Activated CD8-positive, alpha-beta T cell treated with anti-CD3 and anti-CD28 coated beads, Interleukin-2, amount 10 ng/mL, durations not matched to agents 7 days and 5 days (primary cell): ENCODE measurements at regions of chr7 and their contacts with region 1.

Region 1: DNA sequence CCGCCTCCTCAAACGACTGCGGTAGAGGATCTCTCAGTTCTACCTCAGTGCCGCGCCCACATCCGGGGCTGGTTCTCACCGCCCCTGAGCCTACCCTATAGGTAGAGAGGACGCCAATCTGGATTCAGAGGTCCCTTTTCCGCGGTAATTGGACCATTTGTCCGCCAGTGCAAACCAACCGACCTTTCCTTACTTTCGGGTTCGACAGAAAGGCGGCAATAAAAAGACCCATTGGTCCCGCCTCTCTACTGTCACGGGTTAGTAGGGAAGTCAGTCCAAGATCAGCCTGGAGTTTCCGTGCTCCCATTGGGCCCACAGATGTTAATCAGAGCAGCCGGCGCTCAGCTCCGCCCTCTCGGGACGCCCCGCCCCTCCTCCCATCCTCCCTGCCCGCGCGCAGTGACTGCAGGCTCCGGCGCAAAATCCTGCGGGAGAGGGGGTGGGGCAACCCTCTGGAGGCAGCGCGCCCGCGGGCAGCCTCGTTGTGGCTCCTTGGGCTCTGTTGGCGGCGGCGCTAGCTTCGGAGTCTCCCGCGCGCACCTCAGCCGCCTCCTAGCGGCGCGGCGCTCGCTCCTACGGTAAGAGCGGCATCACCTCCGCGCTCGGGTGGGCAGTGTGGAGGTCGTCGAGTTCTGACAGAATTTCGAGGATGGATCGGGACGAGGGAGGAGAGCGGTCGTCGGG is at the starts of genes PHTF2 and TMEM60:
- DNase-seq: peak; percentile 97
- ATAC-seq: peak; percentile 95
- H3K4me3 Mint-ChIP-seq: peak within 1 kb of the TSS; percentile 99
- H3K27ac Mint-ChIP-seq: peak within 1 kb of the TSS; percentile 92
- H3K4me1 Mint-ChIP-seq: peaks cover 62% of the 10 kb centered on the region
- H3K27me3 Mint-ChIP-seq: no peaks in the 10 kb centered on the region
- total RNA-seq, gene PHTF2: 34.9 to 39.1 TPM
- total RNA-seq, gene TMEM60: 14.1 to 14.8 TPM

Region 2: DNA sequence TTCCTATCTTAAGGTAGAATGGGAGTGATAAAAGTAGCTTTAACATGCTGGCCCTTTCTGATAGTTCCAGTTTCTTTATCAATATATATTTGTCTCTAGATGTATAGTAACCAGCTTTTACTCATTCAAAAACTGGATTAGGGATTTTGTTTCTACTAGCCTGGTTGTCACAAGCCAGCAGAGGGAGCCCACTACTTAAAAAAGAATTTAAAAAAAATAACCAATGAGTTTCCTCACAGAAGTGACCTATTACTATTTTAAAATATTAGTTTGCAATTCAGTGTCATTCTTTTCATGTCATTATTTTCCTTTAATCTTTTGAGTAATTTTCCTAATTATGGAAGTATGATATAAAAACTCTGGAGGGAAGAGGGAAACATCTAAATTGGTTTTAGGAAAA is 142.1 kb after region 1 on chr7:
- CTCF ChIA-PET with region 1: interaction called, 11 read pairs
- POLR2A ChIA-PET with region 1: no interaction called
- DNase-seq: peak; percentile 24
- ATAC-seq: no peak
- H3K4me3 Mint-ChIP-seq: no peak overlapping the region
- H3K27ac Mint-ChIP-seq: no peak overlapping the region
- H3K4me1 Mint-ChIP-seq: peaks cover 7% of the 10 kb centered on the region
- H3K27me3 Mint-ChIP-seq: no peaks in the 10 kb centered on the region